Caco-2 (cell line): ENCODE measurements at regions of chr19 and their contacts with region 1.

Region 1: GRCh38 chr19:5031231-5032100 is 62.6 kb downstream of the KDM4B start:
- DNase-seq: peak; percentile 81 to 91
- H3K4me3 ChIP-seq: no peak overlapping the region
- H3K4me3 Mint-ChIP-seq: no peak overlapping the region
- H3K27ac Mint-ChIP-seq: no peak overlapping the region
- H3K4me1 ChIP-seq: no peaks in the 10 kb centered on the region
- H3K4me1 Mint-ChIP-seq: no peaks in the 10 kb centered on the region
- H3K27me3 ChIP-seq: no peaks in the 10 kb centered on the region
- H3K27me3 Mint-ChIP-seq: no peaks in the 10 kb centered on the region
- CTCF ChIP-seq: peak; percentile 85 to 95

Region 2: DNA sequence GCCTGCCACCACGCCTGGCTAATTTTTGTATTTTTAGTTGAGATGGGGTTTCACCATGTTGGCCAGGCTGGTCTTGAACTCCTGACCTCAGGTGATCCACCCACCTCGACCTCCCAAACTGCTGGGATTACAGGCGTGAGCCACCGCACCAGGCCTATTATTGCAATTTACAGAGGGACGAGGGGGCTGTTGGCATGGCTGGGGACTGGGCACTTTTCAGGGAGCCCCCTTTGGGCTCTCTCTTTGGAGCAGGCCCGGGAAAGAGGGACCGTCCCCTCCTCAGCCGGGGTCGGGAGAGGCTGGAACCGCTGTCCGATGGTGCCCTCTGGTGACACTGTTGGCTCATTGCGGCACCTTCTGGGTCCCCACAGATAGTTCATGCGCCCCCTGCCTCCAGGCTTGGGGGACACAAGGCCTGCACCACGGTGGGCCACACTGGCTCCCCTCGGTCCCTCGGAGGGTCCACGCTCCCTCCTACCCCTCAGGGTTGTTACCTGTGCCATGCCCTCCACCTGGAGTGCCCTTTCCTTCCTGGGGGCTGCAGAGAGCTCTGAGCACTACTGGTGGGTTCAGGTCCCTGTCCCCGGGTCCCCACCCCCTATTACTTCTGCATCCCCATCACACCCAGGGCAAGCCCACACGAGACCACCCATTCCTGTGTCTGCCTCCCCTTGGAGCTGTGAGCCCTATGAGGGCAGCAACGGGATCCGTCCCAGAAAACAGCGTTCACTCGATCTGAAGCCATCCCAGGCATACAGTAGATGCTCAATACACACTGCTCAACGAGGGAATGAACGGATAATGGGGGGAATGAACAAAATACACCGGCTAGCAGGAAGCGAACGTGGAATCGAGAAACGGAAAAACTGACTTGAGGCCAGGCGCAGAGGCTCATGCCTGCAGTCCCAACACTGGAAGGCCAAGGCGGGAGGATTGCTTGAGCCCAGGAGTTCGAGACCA is 227.4 kb before region 1 on chr19:
- CTCF ChIA-PET with region 1: interaction called, 23 read pairs
- POLR2A ChIA-PET with region 1: no interaction called
- intact Hi-C with region 1: loop called (anchors 5 kb)
- DNase-seq: peak; percentile 69 to 84
- H3K4me3 ChIP-seq: no peak overlapping the region
- H3K4me3 Mint-ChIP-seq: no peak overlapping the region
- H3K27ac Mint-ChIP-seq: no peak overlapping the region
- H3K4me1 ChIP-seq: peaks cover 6% of the 10 kb centered on the region; the same call in 1 of the 2 replicates
- H3K4me1 Mint-ChIP-seq: no peaks in the 10 kb centered on the region
- H3K27me3 ChIP-seq: no peaks in the 10 kb centered on the region
- H3K27me3 Mint-ChIP-seq: no peaks in the 10 kb centered on the region
- CTCF ChIP-seq: peak; percentile 91 to 92

Region 3: DNA sequence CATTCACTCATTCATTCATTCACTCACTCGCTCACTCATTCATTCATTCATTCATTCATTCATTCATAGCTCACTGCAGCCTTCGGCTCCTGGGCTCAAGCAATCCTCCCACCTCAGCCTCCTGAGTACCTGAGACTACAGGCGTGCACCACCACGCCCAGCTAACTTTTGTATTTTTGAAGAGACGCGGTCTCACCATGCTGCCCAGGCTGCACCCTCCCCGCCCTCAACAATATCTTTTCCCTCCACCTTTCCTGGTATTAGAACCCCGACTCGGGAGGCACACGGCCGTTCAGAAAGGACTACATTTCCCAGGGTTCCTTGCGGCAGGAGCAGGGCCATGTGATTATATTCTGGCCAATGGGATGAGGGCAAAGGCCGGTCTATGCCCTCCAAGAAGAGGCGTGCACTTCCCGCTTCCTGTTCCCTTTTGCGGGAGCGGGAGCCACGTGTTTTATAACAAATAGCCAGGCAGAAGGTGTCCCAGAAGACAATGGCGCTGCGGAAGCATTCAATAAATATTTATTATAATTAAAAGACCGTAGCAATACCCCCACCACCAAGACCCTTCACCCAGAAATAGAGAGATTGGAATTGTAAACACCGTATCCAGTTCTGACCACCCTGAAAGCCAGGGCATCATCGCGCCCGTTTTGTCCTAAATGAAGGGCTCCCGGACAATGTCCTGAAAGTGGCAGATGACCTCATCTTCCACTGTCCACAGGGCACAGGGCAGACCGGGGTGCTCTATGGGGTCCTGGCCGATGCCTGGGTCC is 215.9 kb before region 1 on chr19:
- CTCF ChIA-PET with region 1: interaction called, 23 read pairs
- POLR2A ChIA-PET with region 1: no interaction called
- intact Hi-C with region 1: no loop called
- DNase-seq: peak; percentile 89 to 94
- H3K4me3 ChIP-seq: peak overlapping the region; percentile 44
- H3K4me3 Mint-ChIP-seq: peak overlapping the region; percentile 80
- H3K27ac Mint-ChIP-seq: peak overlapping the region; percentile 39
- H3K4me1 ChIP-seq: peaks cover 3% of the 10 kb centered on the region; the same call in 1 of the 2 replicates
- H3K4me1 Mint-ChIP-seq: peaks cover 9% of the 10 kb centered on the region
- H3K27me3 ChIP-seq: no peaks in the 10 kb centered on the region
- H3K27me3 Mint-ChIP-seq: no peaks in the 10 kb centered on the region
- CTCF ChIP-seq: no peak

Region 4: DNA sequence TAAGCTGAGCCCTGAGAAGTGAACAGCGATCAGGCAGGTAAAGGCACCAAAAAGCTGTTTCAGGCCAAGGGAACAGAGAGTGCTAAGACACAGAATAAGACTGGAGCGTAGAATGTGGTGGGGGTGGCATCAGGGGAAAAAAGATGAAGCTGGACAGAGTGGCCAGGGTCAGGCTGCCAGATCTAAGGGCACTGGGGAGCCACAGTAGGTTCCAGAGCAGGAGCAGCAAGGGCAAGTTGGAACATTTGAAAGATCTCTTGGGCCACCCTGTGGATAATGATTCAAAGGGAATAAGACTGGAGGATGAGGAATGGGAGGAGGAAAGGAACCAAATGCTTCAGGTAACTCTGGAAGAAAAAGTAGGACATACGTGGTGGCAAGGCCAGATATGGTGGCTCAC is 157.5 kb before region 1 on chr19:
- CTCF ChIA-PET with region 1: interaction called, 21 read pairs
- POLR2A ChIA-PET with region 1: no interaction called
- intact Hi-C with region 1: loop called (anchors 1 kb)
- DNase-seq: no peak
- H3K4me3 ChIP-seq: no peak overlapping the region
- H3K4me3 Mint-ChIP-seq: no peak overlapping the region
- H3K27ac Mint-ChIP-seq: no peak overlapping the region
- H3K4me1 ChIP-seq: no peaks in the 10 kb centered on the region
- H3K4me1 Mint-ChIP-seq: peaks cover 6% of the 10 kb centered on the region
- H3K27me3 ChIP-seq: no peaks in the 10 kb centered on the region
- H3K27me3 Mint-ChIP-seq: no peaks in the 10 kb centered on the region
- CTCF ChIP-seq: no peak

Region 5: GRCh38 chr19:4968462-4969291 is 62.8 kb before region 1 on chr19 and contains the start of gene KDM4B:
- CTCF ChIA-PET with region 1: interaction called, 10 read pairs
- POLR2A ChIA-PET with region 1: no interaction called
- intact Hi-C with region 1: no loop called
- DNase-seq: peak; percentile 99
- H3K4me3 ChIP-seq: peak within 1 kb of the TSS; percentile 71
- H3K4me3 Mint-ChIP-seq: peak within 1 kb of the TSS; percentile 85
- H3K27ac Mint-ChIP-seq: peak within 1 kb of the TSS; percentile 88
- H3K4me1 ChIP-seq: peaks cover 15% of the 10 kb centered on the region
- H3K4me1 Mint-ChIP-seq: peaks cover 27% of the 10 kb centered on the region
- H3K27me3 ChIP-seq: no peaks in the 10 kb centered on the region
- H3K27me3 Mint-ChIP-seq: no peaks in the 10 kb centered on the region
- CTCF ChIP-seq: no peak
- total RNA-seq, gene KDM4B: 27.4 and 30.9 TPM in 2 replicates

Region 6: DNA sequence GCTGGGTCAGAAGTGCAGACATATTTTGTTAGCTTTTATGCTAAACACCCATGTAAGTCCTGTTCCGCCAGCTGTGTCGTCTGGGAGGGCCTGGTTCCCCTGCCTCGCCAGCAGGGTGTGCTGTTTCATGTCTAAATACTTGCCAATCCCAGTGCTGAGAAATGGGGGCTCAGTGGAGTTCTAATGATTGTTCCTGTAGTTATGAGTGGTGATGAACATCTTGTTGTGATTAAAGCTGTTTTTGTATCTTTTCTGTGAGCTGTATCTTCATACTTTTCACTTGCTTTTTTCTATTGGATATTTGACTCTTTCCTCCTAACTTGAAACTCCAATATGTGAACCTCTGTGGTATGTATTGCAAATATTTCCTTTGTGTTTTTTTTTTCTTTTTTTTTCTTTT is 29.9 kb before region 1 on chr19:
- CTCF ChIA-PET with region 1: interaction called, 11 read pairs
- POLR2A ChIA-PET with region 1: no interaction called
- intact Hi-C with region 1: loop called (anchors 1 kb)
- DNase-seq: peak in 1 of 2 experiments; percentile 59
- H3K4me3 ChIP-seq: no peak overlapping the region
- H3K4me3 Mint-ChIP-seq: no peak overlapping the region
- H3K27ac Mint-ChIP-seq: peak overlapping the region; percentile 28
- H3K4me1 ChIP-seq: peaks cover 17% of the 10 kb centered on the region; the same call in 1 of the 2 replicates
- H3K4me1 Mint-ChIP-seq: peaks cover 8% of the 10 kb centered on the region
- H3K27me3 ChIP-seq: no peaks in the 10 kb centered on the region
- H3K27me3 Mint-ChIP-seq: no peaks in the 10 kb centered on the region
- CTCF ChIP-seq: peak; percentile 66 to 76